Activated CD4-positive, alpha-beta memory T cell treated with anti-CD3 and anti-CD28 coated beads for 36 hours (primary cell): ENCODE measurements at regions of chr3 and their contacts with region 1.

Region 1: GRCh38 chr3:88113311-88114162 is 36.2 kb upstream of the C3orf38 start:
- DNase-seq: peak; percentile 56
- H3K4me3 Mint-ChIP-seq: no peak overlapping the region
- H3K27ac Mint-ChIP-seq: no peak overlapping the region
- H3K4me1 Mint-ChIP-seq: peaks cover 34% of the 10 kb centered on the region
- H3K27me3 Mint-ChIP-seq: no peaks in the 10 kb centered on the region

Region 2: GRCh38 chr3:87333393-87333892 is 780.1 kb before region 1 on chr3:
- CTCF ChIA-PET with region 1: no interaction called
- POLR2A ChIA-PET with region 1: no interaction called
- intact Hi-C with region 1: loop called (anchors 2 kb)
- DNase-seq: peak; percentile 62
- H3K4me3 Mint-ChIP-seq: no peak overlapping the region
- H3K27ac Mint-ChIP-seq: peak overlapping the region; percentile 87
- H3K4me1 Mint-ChIP-seq: peaks cover 21% of the 10 kb centered on the region
- H3K27me3 Mint-ChIP-seq: peaks cover 2% of the 10 kb centered on the region

Region 3: GRCh38 chr3:87900061-87900460 is 213.5 kb before region 1 on chr3:
- CTCF ChIA-PET with region 1: no interaction called
- POLR2A ChIA-PET with region 1: no interaction called
- intact Hi-C with region 1: loop called (anchors 1 kb)
- DNase-seq: no peak
- H3K4me3 Mint-ChIP-seq: no peak overlapping the region
- H3K27ac Mint-ChIP-seq: no peak overlapping the region
- H3K4me1 Mint-ChIP-seq: no peaks in the 10 kb centered on the region
- H3K27me3 Mint-ChIP-seq: no peaks in the 10 kb centered on the region

Region 4: GRCh38 chr3:88031642-88032077 is 81.9 kb before region 1 on chr3:
- CTCF ChIA-PET with region 1: interaction called, 13 read pairs
- POLR2A ChIA-PET with region 1: no interaction called
- intact Hi-C with region 1: no loop called
- DNase-seq: peak; percentile 22
- H3K4me3 Mint-ChIP-seq: peak overlapping the region; percentile 76
- H3K27ac Mint-ChIP-seq: peak overlapping the region; percentile 84
- H3K4me1 Mint-ChIP-seq: peaks cover 23% of the 10 kb centered on the region
- H3K27me3 Mint-ChIP-seq: no peaks in the 10 kb centered on the region

Region 5: GRCh38 chr3:88131695-88132094 is 18.2 kb after region 1 on chr3:
- CTCF ChIA-PET with region 1: interaction called, 6 read pairs
- POLR2A ChIA-PET with region 1: interaction called, 10 read pairs
- intact Hi-C with region 1: loop called (anchors 2 kb)
- DNase-seq: no peak
- H3K4me3 Mint-ChIP-seq: no peak overlapping the region
- H3K27ac Mint-ChIP-seq: no peak overlapping the region
- H3K4me1 Mint-ChIP-seq: peaks cover 18% of the 10 kb centered on the region
- H3K27me3 Mint-ChIP-seq: no peaks in the 10 kb centered on the region